AG04450 (cell line): ENCODE measurements at regions of chr20 and their contacts with region 1.

Region 1: GRCh38 chr20:49982346-49983122 is at the start of gene SNAI1:
- DNase-seq: peak; percentile 73
- H3K4me3 ChIP-seq: peak within 1 kb of the TSS; percentile 93
- H3K27ac ChIP-seq: peak within 1 kb of the TSS; percentile 39
- H3K27me3 ChIP-seq: peaks cover 6% of the 10 kb centered on the region
- CTCF ChIP-seq: peak; percentile 45
- polyA plus RNA-seq, gene SNAI1: 2.3 and 3.5 TPM in 2 replicates

Region 2: GRCh38 chr20:49948809-49949548 is 33.6 kb before region 1 on chr20:
- CTCF ChIA-PET with region 1: interaction called, 20 read pairs
- POLR2A ChIA-PET with region 1: interaction called, 7 read pairs
- DNase-seq: peak; percentile 92
- H3K4me3 ChIP-seq: no peak overlapping the region
- H3K27ac ChIP-seq: peak overlapping the region; percentile 100
- H3K27me3 ChIP-seq: no peaks in the 10 kb centered on the region
- CTCF ChIP-seq: no peak

Region 3: DNA sequence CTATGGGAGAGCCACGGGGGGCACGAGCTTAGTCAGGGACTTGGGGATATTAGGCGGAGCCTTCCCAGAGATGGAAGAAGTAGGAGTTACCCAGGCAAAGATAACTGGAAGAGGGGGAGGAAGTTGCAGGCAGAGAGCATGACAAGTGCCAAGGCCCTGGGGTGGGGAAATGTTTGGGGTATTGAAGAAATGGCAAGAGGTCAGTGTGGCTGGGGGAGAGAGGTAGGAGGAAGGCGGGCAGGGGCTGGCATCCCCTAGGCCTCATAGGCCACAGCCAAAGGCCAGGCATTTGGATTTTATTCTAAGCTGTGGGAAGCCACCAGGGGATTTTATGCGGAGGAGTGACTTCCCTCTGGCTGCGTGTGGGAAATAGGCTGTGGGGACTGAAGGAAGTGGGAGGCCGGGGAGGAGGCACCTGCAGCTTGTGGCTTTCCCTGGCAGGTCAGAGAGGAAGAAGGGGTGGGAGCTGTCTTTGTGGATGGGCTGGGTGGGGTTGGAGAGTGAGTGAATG is 23.0 kb after region 1 on chr20:
- CTCF ChIA-PET with region 1: interaction called, 12 read pairs
- POLR2A ChIA-PET with region 1: interaction called, 4 read pairs
- DNase-seq: no peak
- H3K4me3 ChIP-seq: no peak overlapping the region
- H3K27ac ChIP-seq: no peak overlapping the region
- H3K27me3 ChIP-seq: no peaks in the 10 kb centered on the region
- CTCF ChIP-seq: no peak

Region 4: DNA sequence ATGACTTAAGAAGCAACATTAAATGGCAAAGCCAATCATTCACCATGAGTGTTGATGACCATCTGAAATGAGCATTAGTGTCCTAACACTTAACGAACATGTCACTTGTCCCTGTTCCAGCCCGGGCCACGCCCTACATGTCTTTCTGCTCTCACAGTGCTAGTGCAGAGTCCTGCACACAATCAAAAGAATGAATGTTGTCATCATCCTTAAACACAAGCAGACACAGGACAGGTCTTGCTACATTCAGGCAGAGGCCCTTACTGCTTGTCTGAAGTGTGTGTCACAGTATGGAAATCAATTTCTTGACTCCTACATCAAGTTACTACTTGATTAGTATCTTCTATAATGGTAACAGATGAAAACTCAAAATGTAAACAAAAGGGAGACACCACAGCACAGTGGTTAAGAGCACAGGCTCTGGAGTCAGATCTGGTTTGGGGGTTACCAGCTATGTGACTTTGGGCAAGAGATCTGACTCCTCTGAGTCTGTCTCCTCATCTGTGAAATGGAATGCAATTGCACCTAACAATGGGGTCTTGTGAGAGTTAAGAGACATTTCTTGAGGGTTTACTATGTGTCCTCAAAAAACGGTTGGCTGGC is 113.0 kb after region 1 on chr20:
- CTCF ChIA-PET with region 1: interaction called, 24 read pairs
- POLR2A ChIA-PET with region 1: no interaction called
- DNase-seq: no peak
- H3K4me3 ChIP-seq: no peak overlapping the region
- H3K27ac ChIP-seq: no peak overlapping the region
- H3K27me3 ChIP-seq: no peaks in the 10 kb centered on the region
- CTCF ChIP-seq: no peak

Region 5: GRCh38 chr20:50120897-50121693 is 138.6 kb after region 1 on chr20:
- CTCF ChIA-PET with region 1: interaction called, 13 read pairs
- POLR2A ChIA-PET with region 1: interaction called, 6 read pairs
- DNase-seq: peak; percentile 36
- H3K4me3 ChIP-seq: no peak overlapping the region
- H3K27ac ChIP-seq: no peak overlapping the region
- H3K27me3 ChIP-seq: no peaks in the 10 kb centered on the region
- CTCF ChIP-seq: peak; percentile 84

Region 6: GRCh38 chr20:50172347-50173013 is 189.9 kb after region 1 on chr20:
- CTCF ChIA-PET with region 1: interaction called, 37 read pairs
- POLR2A ChIA-PET with region 1: no interaction called
- DNase-seq: no peak
- H3K4me3 ChIP-seq: peak overlapping the region; percentile 62
- H3K27ac ChIP-seq: peak overlapping the region; percentile 65
- H3K27me3 ChIP-seq: no peaks in the 10 kb centered on the region
- CTCF ChIP-seq: no peak